ENCODE measurements at regions of chr21 and their contacts with region 1.

Region 1: GRCh38 chr21:36141513-36141925 is 6.6 kb downstream of the CBR3 start:
- DNase-seq: peak; percentile 87 to 96 (median 89)
- H3K4me3 ChIP-seq: no peak overlapping the region
- H3K4me3 Mint-ChIP-seq: peak overlapping the region in 5 of 8 donors; percentile 7 to 53 (median 12)
- H3K27ac ChIP-seq: peak overlapping the region; percentile 54
- H3K27ac Mint-ChIP-seq: peak overlapping the region; percentile 69 to 95 (median 89)
- H3K4me1 ChIP-seq: peaks cover 40% of the 10 kb centered on the region
- H3K4me1 Mint-ChIP-seq: peaks cover 25 to 50% (median 29%) of the 10 kb centered on the region in 4 donors
- H3K27me3 ChIP-seq: no peaks in the 10 kb centered on the region
- H3K27me3 Mint-ChIP-seq: no peaks in the 10 kb centered on the region

Region 2: DNA sequence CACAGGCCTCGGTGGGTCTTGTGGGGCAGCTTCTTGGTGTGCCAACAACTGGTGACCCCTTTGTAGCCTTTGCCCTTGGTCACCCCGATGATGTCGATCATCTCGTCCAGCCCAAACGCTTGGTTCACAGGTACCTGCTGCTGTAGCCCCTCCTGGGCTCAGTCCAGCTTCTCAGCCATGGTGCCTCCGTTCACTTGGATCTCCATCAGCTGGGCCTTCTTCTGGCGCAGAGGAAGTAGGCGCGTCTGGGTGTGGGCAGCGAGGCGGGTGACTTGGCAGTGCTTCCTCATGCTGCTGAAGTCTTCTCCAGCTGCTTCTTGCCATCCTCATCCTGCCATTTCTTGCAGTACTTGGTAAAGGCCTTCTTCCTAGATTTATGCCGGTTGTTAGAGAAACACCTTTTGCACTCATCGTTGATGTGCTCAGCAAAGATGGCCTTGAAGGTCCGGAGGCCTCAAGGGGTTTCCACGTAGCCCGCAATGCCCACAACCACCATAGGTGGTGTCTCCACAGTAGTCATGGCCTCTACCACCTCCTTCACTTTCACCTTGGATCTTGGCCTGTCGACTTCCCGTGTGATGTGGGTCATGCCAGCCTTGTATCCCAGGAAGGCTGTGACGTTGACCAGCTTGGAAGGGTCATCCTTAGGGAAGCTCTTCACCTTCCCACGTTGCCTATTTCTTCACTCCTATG is 28.1 kb after region 1 on chr21:
- CTCF ChIA-PET with region 1: interaction called, 24 read pairs
- POLR2A ChIA-PET with region 1: interaction called, 9 read pairs
- intact Hi-C with region 1: loop called (anchors 1 kb)
- DNase-seq: no peak
- H3K4me3 ChIP-seq: no peak overlapping the region
- H3K4me3 Mint-ChIP-seq: no peak overlapping the region
- H3K27ac ChIP-seq: no peak overlapping the region
- H3K27ac Mint-ChIP-seq: peak overlapping the region in 1 of 7 donors; percentile 86
- H3K4me1 ChIP-seq: peaks cover 16% of the 10 kb centered on the region
- H3K4me1 Mint-ChIP-seq: peaks cover 6 to 19% (median 7%) of the 10 kb centered on the region in 4 donors
- H3K27me3 ChIP-seq: no peaks in the 10 kb centered on the region
- H3K27me3 Mint-ChIP-seq: no peaks in the 10 kb centered on the region

Region 3: DNA sequence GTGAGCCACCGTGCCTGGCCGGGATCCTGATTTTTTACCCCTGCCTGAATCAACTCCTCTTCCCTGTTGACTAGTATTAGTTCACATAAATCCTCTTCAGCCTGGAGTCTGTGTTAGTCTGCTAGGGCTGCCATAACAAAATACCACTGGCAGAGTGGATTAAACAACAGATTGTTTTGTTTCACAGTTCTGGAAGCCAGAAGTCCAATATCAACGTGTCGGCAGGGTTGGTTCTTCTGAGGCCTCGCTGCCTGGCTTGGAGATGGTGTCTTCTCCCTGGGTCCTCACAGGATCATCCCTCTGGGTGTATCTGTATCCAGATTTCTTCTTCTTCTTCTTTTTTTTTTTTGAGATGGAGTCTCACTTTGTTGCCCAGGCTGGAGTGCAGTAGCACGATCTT is 33.3 kb after region 1 on chr21:
- CTCF ChIA-PET with region 1: interaction called, 24 read pairs
- POLR2A ChIA-PET with region 1: interaction called, 9 read pairs
- intact Hi-C with region 1: loop called (anchors 1 kb)
- DNase-seq: no peak
- H3K4me3 ChIP-seq: no peak overlapping the region
- H3K4me3 Mint-ChIP-seq: peak overlapping the region in 2 of 8 donors; percentile 13 to 52
- H3K27ac ChIP-seq: no peak overlapping the region
- H3K27ac Mint-ChIP-seq: peak overlapping the region in 5 of 7 donors; percentile 10 to 85 (median 36)
- H3K4me1 ChIP-seq: peaks cover 18% of the 10 kb centered on the region
- H3K4me1 Mint-ChIP-seq: peaks cover 10 to 23% (median 13%) of the 10 kb centered on the region in 4 donors
- H3K27me3 ChIP-seq: no peaks in the 10 kb centered on the region
- H3K27me3 Mint-ChIP-seq: no peaks in the 10 kb centered on the region

Region 4: GRCh38 chr21:36209626-36210171 is 68.2 kb after region 1 on chr21:
- CTCF ChIA-PET with region 1: interaction called, 77 read pairs
- POLR2A ChIA-PET with region 1: interaction called, 7 read pairs
- intact Hi-C with region 1: loop called (anchors 1 kb)
- DNase-seq: peak; percentile 46 to 53 (median 49)
- H3K4me3 ChIP-seq: no peak overlapping the region
- H3K4me3 Mint-ChIP-seq: no peak overlapping the region
- H3K27ac ChIP-seq: no peak overlapping the region
- H3K27ac Mint-ChIP-seq: peak overlapping the region in 3 of 7 donors; percentile 2 to 22 (median 10)
- H3K4me1 ChIP-seq: no peaks in the 10 kb centered on the region
- H3K4me1 Mint-ChIP-seq: peaks cover 3 to 8% (median 5%) of the 10 kb centered on the region in 4 donors
- H3K27me3 ChIP-seq: no peaks in the 10 kb centered on the region
- H3K27me3 Mint-ChIP-seq: no peaks in the 10 kb centered on the region

Region 5: GRCh38 chr21:36330904-36331303 is 189.4 kb after region 1 on chr21:
- CTCF ChIA-PET with region 1: interaction called, 34 read pairs
- POLR2A ChIA-PET with region 1: interaction called, 3 read pairs
- intact Hi-C with region 1: loop called (anchors 1 kb)
- DNase-seq: peak; percentile 43 to 61 (median 53)
- H3K4me3 ChIP-seq: no peak overlapping the region
- H3K4me3 Mint-ChIP-seq: peak overlapping the region in 2 of 8 donors; percentile 0 to 61
- H3K27ac ChIP-seq: no peak overlapping the region
- H3K27ac Mint-ChIP-seq: peak overlapping the region in 6 of 7 donors; percentile 58 to 75 (median 70)
- H3K4me1 ChIP-seq: peaks cover 53% of the 10 kb centered on the region
- H3K4me1 Mint-ChIP-seq: peaks cover 38 to 58% (median 47%) of the 10 kb centered on the region in 4 donors
- H3K27me3 ChIP-seq: no peaks in the 10 kb centered on the region
- H3K27me3 Mint-ChIP-seq: no peaks in the 10 kb centered on the region

Region 6: DNA sequence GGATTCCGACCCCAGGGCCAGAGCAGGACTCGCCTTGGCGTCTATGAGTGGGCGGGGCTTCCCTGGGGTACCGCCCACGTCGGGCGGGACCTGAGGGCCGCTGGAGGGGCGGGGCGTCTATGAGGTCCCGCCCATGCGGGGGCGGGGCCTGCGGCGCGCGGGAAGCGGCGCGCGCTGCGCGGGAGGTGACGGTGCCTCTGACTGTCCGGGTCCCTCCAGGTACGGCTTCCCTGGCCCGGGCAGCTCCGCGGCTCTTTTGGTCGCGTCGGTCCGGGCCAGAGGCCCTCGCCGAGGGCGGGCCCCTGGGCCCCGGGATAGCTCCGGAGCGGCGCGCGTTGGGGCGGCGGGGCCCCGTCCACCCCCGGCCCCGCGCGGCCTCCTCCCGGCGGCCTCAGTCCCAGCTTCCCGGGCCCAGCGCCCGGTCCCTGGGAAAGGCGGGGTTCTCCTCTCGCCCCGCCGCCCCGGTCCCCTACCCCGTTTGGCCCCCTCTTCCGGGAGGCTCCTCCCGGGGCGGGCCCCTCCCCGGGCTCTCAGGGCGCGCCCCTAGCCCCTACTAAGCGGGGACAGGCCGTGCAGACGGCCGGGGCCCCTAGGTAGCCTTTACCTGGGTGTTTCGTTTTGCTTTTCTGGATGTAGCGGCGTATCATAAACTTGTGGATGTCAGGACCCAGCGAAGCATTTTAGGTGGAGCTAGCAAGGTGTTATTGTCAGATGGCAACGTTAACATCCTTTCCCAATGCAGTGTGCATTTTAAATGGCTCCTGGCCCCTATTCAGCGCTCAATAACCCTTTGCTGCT is 243.9 kb after region 1 on chr21 and contains the start of gene CHAF1B:
- CTCF ChIA-PET with region 1: interaction called, 3 read pairs
- POLR2A ChIA-PET with region 1: no interaction called
- intact Hi-C with region 1: loop called (anchors 5 kb)
- DNase-seq: peak; percentile 72 to 88 (median 82)
- H3K4me3 ChIP-seq: peak within 1 kb of the TSS; percentile 48 to 66
- H3K4me3 Mint-ChIP-seq: peak within 1 kb of the TSS; percentile 81 to 90 (median 84)
- H3K27ac ChIP-seq: peak within 1 kb of the TSS; percentile 56
- H3K27ac Mint-ChIP-seq: peak within 1 kb of the TSS in 6 of 7 donors; percentile 72 to 86 (median 78)
- H3K4me1 ChIP-seq: peaks cover 11% of the 10 kb centered on the region
- H3K4me1 Mint-ChIP-seq: peaks cover 7 to 15% (median 9%) of the 10 kb centered on the region in 4 donors
- H3K27me3 ChIP-seq: no peaks in the 10 kb centered on the region
- H3K27me3 Mint-ChIP-seq: no peaks in the 10 kb centered on the region
- total RNA-seq, gene CHAF1B: 1.3 to 1.6 TPM